HepG2 (cell line): ENCODE measurements at regions of chr17 and their contacts with region 1.

Region 1: DNA sequence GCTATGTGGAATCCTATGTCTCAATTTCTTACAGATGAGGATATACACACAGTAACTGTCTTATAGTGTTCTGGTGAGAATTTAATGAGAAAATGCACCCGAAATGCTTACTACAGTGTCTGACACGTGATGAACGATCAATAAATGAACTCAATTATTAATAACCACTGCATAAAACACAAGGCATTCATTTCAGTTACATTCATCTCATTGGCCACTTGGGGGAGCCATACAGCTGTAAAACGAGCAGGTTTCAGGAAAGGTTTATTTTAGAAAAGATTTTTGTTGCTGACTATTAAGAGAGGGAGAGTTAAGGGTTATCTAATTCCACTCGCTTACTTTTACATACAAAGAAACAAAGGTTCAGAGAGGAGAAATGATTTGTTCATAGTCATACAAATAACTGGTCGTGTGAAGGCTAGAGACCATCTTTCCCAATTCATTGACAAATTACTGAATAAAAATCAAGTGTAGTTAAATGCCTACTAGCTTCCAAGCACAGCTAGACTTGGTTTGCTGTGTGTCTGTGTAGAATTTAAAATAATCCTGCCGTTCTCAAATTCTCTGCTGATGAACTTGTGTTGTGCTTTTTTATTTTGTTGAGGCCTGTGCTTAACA is 160.1 kb downstream of the MAP2K4 start:
- DNase-seq: peak; percentile 47
- ATAC-seq: no peak; the same call in 2 of the 3 replicates
- H3K4me3 ChIP-seq: no peak overlapping the region
- H3K27ac ChIP-seq: no peak overlapping the region
- H3K4me1 ChIP-seq: no peaks in the 10 kb centered on the region
- H3K27me3 ChIP-seq: no peaks in the 10 kb centered on the region; a peak in 1 of 5 replicates
- CTCF ChIP-seq: peak; percentile 73
- EP300 ChIP-seq: no peak
- POLR2A ChIP-seq: no peak
- RAD21 ChIP-seq: no peak

Region 2: DNA sequence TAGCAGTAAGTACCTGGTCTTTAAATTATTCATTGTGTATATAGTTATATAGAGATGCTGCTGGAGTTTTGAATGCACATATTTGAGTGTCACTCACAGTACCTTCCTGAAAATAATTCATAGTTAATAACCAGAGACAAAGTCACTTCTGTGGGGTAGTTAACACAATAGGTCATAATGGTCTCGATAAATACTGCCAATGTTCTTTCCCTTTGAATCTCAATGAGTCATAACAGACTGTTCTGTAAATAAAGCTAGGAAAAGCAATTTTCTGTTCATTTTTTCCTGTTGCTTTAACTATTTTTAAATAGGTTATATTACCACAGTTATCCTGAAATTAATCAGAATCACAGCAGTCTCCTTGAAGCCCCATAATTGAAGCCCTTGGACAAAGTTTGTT is 72.8 kb before region 1 on chr17:
- CTCF ChIA-PET with region 1: no interaction called
- POLR2A ChIA-PET with region 1: no interaction called
- in situ Hi-C with region 1: no loop called
- intact Hi-C with region 1: no loop called
- DNase-seq: no peak
- ATAC-seq: no peak
- H3K4me3 ChIP-seq: no peak overlapping the region
- H3K27ac ChIP-seq: no peak overlapping the region
- H3K4me1 ChIP-seq: no peaks in the 10 kb centered on the region; the same call in 1 of the 2 replicates
- H3K27me3 ChIP-seq: no peaks in the 10 kb centered on the region
- CTCF ChIP-seq: no peak
- EP300 ChIP-seq: no peak
- POLR2A ChIP-seq: no peak
- RAD21 ChIP-seq: no peak

Region 3: DNA sequence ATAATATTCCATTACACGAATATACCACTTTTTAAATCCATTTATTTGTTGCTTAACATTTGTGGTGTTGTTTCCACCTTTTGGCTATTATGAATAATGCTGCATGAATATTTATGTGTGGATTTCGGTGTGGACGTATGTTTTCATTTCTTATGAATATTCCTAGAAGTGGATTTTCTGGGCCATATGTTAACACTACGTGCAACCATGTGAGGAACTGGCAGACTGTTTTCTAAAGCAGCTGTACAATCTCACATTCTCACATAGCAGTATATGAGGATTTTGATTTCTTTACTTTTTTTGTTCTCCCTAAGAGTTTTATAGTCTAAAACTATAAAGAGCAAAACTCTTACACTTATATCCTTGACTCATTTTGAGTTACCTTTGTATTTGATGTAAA is 16.7 kb before region 1 on chr17:
- CTCF ChIA-PET with region 1: no interaction called
- POLR2A ChIA-PET with region 1: no interaction called
- in situ Hi-C with region 1: no loop called
- intact Hi-C with region 1: no loop called
- DNase-seq: no peak
- ATAC-seq: no peak
- H3K4me3 ChIP-seq: no peak overlapping the region
- H3K27ac ChIP-seq: no peak overlapping the region
- H3K4me1 ChIP-seq: no peaks in the 10 kb centered on the region
- H3K27me3 ChIP-seq: no peaks in the 10 kb centered on the region
- CTCF ChIP-seq: no peak
- EP300 ChIP-seq: no peak
- POLR2A ChIP-seq: no peak
- RAD21 ChIP-seq: no peak

Region 4: DNA sequence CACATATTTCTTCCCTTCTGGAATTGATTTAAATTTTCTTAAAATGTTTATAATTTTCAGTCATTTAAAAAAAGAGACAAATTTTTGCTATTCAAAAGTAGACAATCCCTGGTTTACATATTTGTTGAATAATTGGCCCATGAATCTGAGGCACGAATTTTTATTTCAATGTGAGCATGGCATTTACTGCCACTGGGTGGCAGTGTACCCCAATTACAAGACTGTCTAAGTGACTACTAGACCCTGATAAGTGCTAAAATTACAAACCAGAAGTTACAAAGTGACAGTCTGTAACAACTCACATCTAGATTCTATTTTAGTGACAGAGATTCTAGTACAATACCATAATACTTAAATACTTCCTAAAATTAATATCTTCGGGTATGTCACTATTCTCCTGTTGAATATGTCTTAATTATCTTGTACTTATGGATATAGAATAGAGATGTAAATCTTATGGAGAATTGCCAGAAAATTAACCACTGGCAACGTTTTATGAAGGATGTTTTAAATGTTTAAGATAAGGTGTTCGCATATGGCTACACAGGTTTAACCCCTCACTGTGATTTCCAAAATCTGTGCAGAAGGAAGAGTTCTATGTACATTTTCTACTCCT is 75.7 kb after region 1 on chr17:
- CTCF ChIA-PET with region 1: no interaction called
- POLR2A ChIA-PET with region 1: no interaction called
- in situ Hi-C with region 1: no loop called
- intact Hi-C with region 1: loop called (anchors 1 kb)
- DNase-seq: peak; percentile 35
- ATAC-seq: peak; percentile 39; the same call in 2 of the 3 replicates
- H3K4me3 ChIP-seq: no peak overlapping the region
- H3K27ac ChIP-seq: no peak overlapping the region
- H3K4me1 ChIP-seq: no peaks in the 10 kb centered on the region
- H3K27me3 ChIP-seq: peaks cover 4 to 38% of the 10 kb centered on the region in 2 experiments; a peak in 3 of 5 replicates
- CTCF ChIP-seq: peak; percentile 67
- EP300 ChIP-seq: no peak
- POLR2A ChIP-seq: no peak
- RAD21 ChIP-seq: peak; percentile 45

Region 5: GRCh38 chr17:12667299-12667958 is 486.7 kb after region 1 on chr17:
- CTCF ChIA-PET with region 1: interaction called, 4 read pairs
- POLR2A ChIA-PET with region 1: no interaction called
- in situ Hi-C with region 1: loop called (anchors 5 kb)
- intact Hi-C with region 1: loop called (anchors 5 kb)
- DNase-seq: peak; percentile 62
- ATAC-seq: peak; percentile 67
- H3K4me3 ChIP-seq: no peak overlapping the region
- H3K27ac ChIP-seq: no peak overlapping the region
- H3K4me1 ChIP-seq: no peaks in the 10 kb centered on the region
- H3K27me3 ChIP-seq: peaks cover 0 to 39% of the 10 kb centered on the region in 2 experiments; a peak in 4 of 5 replicates
- CTCF ChIP-seq: peak; percentile 66
- EP300 ChIP-seq: no peak
- POLR2A ChIP-seq: no peak
- RAD21 ChIP-seq: 0 out of 2 replicates have a peak, but pooled peaks have one; percentile 41

Region 6: GRCh38 chr17:12744298-12744697 is 563.5 kb after region 1 on chr17:
- CTCF ChIA-PET with region 1: interaction called, 10 read pairs
- POLR2A ChIA-PET with region 1: no interaction called
- in situ Hi-C with region 1: no loop called
- intact Hi-C with region 1: loop called (anchors 1 kb)
- DNase-seq: no peak
- ATAC-seq: no peak
- H3K4me3 ChIP-seq: no peak overlapping the region
- H3K27ac ChIP-seq: no peak overlapping the region
- H3K4me1 ChIP-seq: no peaks in the 10 kb centered on the region
- H3K27me3 ChIP-seq: peaks cover under 1 to 6% of the 10 kb centered on the region in 2 experiments; a peak in 2 of 5 replicates
- CTCF ChIP-seq: no peak
- EP300 ChIP-seq: no peak
- POLR2A ChIP-seq: no peak
- RAD21 ChIP-seq: no peak